ENCODE measurements at regions of chr17 and their contacts with region 1.

Region 1: DNA sequence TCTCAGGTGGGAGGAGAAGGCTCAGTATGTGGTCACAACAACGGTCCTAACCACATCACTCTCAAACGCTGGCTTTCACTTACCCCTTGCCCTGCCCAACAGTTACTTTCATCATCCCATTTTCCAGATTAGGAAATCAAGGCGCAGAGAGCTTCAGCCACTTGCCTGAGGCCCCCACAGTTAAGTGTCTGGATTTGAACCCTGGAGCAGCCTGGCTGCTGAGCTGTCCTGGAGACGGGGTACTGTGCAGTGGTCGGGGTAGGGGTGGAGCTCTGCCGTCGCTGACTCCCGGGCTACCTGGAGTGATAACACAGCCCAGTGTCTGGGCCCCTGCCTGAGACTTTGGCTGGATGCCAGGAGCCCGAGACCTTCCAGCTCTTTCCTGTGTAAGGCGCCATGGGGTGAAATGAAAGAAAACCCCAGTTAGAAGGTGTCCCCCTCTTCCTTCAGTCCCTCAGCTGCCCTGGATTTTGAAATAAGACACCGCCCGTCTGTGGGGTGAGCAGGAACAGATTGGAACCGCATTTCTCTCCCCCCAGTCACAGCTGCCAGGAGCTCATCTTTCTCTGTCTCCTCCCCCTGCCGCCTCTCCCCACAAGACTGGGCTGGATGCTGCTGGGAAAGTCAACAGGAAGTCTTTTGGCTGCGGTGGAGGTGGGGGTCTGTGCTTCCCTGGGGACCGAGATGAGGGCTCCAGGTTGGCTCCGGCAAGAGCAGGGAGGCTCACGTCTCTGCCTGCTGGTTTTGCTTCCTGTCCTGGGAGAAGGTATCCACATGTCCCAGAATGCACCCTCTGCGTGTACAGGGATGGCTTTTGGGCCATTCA is 280.2 kb downstream of the SEC14L1 start:
- DNase-seq: peak; percentile 74
- H3K4me3 ChIP-seq: peak overlapping the region; percentile 14; the same call in 1 of the 2 replicates
- H3K27ac ChIP-seq: peak overlapping the region; percentile 69
- H3K27me3 ChIP-seq: no peaks in the 10 kb centered on the region
- CTCF ChIP-seq: no peak

Region 2: DNA sequence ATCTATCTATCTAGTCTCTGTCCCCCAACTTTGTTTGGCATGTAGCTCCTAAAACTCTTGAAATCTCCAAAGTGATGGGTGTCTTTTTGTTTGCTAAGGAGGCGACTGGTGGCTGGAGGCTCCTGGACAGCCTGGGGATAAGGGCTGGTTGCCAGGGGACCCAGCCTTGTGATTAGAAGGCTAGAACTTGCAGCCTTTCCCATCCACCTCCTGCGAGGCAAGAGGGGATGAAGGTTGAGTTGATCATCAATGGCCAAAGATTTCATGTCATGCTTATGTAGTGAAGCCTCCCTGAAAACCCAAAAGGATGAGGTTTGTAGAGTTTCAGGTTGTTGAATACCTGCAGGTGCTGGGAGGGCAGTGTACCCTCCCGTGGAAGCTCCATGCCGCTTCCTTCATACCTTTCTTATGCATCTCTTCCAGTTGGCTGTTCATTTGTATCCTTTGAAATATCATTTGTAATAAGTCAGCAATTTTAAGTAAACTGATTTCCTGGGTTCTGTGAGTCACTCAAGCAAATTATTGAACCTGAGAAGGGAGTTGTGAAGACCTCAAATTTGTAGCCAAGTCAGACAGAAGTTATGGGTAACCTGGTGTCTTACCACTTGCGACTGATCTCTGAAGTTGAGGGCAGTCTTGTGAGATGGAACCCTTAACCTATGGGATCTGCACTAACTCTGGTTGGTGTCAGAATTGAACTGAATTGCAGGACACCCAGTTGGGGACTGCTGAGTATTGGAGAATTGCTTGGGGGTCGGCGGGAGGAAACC is 77.8 kb before region 1 on chr17:
- CTCF ChIA-PET with region 1: no interaction called
- POLR2A ChIA-PET with region 1: no interaction called
- DNase-seq: no peak
- H3K4me3 ChIP-seq: no peak overlapping the region
- H3K27ac ChIP-seq: no peak overlapping the region
- H3K27me3 ChIP-seq: no peaks in the 10 kb centered on the region
- CTCF ChIP-seq: no peak

Region 3: DNA sequence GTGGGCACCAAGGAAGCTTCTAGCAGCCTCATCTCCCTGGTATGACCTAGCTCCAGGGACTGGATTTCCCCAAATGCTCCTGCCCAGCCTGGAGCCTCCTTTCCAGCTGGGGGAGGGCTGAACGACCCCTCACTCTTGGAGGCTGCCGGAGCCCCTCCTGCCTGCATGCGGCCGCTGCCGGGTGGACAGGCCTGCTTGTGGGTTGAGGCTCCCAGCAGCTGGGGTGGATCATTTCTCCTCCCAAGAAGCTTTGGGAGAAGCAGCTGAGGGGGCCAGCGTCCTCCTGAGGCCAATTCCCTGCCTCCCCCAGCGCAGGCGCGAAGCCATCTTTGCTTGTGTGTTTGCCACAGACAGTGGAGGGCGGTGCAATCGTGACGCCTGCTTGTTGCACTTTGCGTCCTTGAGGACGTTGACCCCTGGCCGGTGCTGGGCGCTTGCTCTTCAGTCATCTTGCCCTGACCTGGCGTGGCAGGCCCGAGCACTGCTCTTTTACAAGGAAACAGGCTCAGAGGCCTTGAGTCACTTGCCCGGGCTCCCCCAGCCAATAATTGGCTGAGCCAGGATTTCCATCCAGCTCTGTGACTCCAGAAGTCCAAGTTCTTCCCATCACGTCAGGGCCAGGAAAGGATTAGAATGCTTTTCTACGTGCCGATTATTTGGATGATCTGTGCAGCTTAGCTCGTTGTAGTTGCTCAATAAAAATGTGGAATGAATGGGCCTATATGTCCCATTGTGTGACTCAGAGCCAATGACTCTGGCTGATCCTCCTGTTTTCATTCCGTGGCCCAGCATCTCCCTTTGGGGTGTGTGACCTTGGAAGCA is 66.4 kb before region 1 on chr17:
- CTCF ChIA-PET with region 1: no interaction called
- POLR2A ChIA-PET with region 1: interaction called, 10 read pairs
- DNase-seq: peak; percentile 90
- H3K4me3 ChIP-seq: no peak overlapping the region
- H3K27ac ChIP-seq: peak overlapping the region; percentile 98
- H3K27me3 ChIP-seq: no peaks in the 10 kb centered on the region
- CTCF ChIP-seq: no peak

Region 4: GRCh38 chr17:77391668-77392375 is 29.2 kb before region 1 on chr17:
- CTCF ChIA-PET with region 1: no interaction called
- POLR2A ChIA-PET with region 1: interaction called, 10 read pairs
- DNase-seq: peak; percentile 96
- H3K4me3 ChIP-seq: peak overlapping the region; percentile 21
- H3K27ac ChIP-seq: peak overlapping the region; percentile 94
- H3K27me3 ChIP-seq: no peaks in the 10 kb centered on the region
- CTCF ChIP-seq: no peak